Sciatic nerve (tissue), 2 donors: ENCODE measurements at regions of chr2 and their contacts with region 1.

Region 1: DNA sequence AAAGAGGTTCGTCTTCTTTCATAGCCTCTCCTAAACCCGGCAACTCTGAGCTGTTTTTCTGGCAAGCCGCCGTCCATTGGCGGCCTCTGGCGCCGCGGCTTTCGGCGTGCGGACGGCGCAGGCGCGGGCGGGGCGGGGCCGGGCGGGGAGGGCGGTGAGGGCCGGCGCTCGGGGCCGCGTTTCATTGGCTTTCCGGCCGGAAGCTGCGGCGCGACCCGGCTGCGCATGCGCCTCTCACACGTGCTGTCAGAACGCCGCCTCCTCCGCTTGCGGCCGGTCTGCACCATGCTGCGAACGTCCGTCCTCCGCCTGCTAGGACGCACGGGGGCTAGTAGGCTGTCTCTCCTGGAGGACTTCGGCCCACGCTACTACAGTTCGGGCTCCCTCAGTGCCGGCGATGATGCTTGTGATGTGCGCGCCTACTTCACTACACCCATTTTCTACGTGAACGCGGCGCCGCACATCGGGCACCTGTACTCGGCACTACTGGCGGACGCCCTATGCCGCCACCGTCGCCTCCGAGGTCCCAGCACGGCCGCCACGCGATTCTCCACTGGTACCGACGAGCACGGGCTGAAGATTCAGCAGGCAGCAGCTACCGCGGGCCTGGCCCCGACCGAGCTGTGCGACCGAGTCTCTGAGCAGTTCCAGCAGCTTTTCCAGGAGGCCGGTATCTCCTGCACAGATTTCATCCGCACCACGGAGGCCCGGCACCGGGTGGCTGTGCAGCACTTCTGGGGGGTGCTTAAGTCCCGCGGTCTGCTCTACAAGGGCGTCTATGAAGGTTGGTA is at the start of gene MARS2:
- DNase-seq: peak; percentile 95
- ATAC-seq: peak; percentile 98
- total RNA-seq, gene MARS2: 3.1 TPM

Region 2: DNA sequence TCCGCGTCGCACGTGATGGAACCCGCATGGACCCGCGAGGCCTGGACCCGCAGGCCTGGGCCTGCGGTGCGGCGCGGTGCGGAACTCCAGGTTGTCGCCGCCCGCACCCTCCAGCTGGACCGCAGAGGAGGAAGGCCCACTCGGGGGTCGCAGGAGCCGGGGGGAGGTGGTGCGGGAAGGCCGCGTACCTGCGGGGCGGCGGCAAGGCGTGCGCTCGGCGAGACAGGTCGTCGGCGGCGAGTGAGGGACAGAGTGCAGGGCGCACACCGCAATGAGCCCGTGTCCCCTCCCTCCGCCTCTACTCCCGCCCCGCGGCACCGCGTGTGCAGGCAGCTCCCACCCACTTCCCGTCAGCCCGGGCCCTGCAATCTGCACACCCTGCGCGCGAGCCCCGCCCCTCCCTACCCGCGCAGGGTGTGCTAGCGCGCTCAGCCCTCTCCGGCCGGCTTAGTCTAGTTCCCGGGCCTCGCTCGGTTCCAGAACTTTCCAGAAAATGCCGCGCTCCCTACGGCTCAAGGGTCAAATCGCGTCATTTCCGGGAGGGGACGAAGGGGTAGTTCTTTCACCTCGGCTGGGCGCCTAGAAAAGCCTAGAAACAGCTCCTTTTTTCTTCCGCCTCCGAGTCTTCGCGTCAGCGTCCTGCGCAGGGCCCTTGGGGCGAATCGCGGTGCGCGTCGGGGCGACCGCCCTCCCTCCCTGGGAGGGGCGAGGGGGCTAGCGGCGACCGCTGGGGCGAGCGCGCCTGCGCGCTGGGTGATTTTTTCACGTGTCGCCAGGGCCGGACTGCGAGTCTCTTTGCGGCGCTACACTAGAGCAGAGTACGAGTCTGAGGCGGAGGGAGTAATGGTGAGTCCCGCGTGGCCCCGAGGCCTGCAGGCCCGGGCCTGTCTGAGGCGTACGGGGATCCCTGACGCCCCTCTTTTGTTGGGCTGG is 205.5 kb before region 1 on chr2 and contains the starts of genes HSPD1 and HSPE1:
- intact Hi-C with region 1: loop called (anchors 10 kb)
- DNase-seq: peak; percentile 99
- ATAC-seq: peak; percentile 98
- total RNA-seq, gene HSPD1: 136 TPM
- total RNA-seq, gene HSPE1: 60.4 TPM